ENCODE measurements at regions of chr7 and their contacts with region 1.

Region 1: GRCh38 chr7:74115326-74115725 is 31.7 kb downstream of the LIMK1 start:
- DNase-seq: no peak
- H3K4me3 ChIP-seq: no peak overlapping the region
- H3K27ac ChIP-seq: no peak overlapping the region
- H3K4me1 ChIP-seq: no peaks in the 10 kb centered on the region
- H3K27me3 ChIP-seq: no peaks in the 10 kb centered on the region
- CTCF ChIP-seq: no peak

Region 2: GRCh38 chr7:73822319-73823076 is 292.8 kb before region 1 on chr7:
- CTCF ChIA-PET with region 1: no interaction called
- dilution Hi-C with region 1: no loop called
- in situ Hi-C with region 1: no loop called
- intact Hi-C with region 1: no loop called
- DNase-seq: peak; percentile 100
- H3K4me3 ChIP-seq: no peak overlapping the region
- H3K27ac ChIP-seq: peak overlapping the region; percentile 90
- H3K4me1 ChIP-seq: peaks cover 19% of the 10 kb centered on the region
- H3K27me3 ChIP-seq: no peaks in the 10 kb centered on the region
- CTCF ChIP-seq: no peak

Region 3: DNA sequence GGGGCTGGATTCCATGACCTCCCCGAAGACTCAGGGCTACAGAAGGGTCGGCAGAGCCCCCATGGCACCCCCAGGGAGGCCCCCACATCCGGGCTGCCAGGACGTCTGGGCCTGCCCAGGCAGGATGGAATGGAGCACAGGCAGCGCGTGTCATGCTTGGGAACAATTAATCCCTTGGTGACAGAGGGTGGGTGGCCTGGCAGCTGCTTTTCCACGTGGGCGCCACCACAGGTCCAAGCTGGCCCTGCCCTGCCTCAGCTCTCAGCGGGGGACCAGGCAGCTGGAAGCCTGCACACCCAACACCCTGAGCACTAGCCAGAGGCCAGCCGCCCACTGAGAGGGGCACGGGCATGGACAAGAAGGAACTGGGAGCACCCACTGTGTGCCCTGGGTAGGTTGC is 76.0 kb before region 1 on chr7:
- CTCF ChIA-PET with region 1: no interaction called
- dilution Hi-C with region 1: loop called (anchors 5 kb)
- in situ Hi-C with region 1: no loop called
- intact Hi-C with region 1: no loop called
- DNase-seq: peak; percentile 10
- H3K4me3 ChIP-seq: no peak overlapping the region
- H3K27ac ChIP-seq: no peak overlapping the region
- H3K4me1 ChIP-seq: peaks cover 13% of the 10 kb centered on the region
- H3K27me3 ChIP-seq: no peaks in the 10 kb centered on the region
- CTCF ChIP-seq: no peak

Region 4: DNA sequence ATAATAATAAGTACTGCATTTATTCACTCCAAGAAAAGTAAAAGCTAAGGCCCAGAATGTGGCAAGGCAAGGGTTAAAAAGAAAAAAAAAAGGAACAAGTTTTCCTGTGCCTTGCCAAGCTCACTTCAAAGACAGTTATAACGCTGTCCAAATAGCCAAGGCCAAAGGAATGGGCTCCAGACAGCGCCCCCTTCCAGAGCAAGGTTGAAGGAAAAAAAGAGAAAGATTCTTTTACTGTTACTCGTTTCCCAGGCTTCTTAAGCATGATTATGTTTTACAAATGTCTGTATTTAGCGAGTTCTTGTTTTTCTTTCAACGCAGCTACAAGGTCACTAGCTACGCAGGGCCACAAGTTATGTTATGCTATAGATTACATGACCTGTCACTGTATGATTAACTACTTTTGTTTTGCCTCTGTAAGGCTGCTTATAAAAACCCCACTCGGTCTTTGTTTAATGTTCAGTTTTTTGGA is 49.7 kb after region 1 on chr7:
- CTCF ChIA-PET with region 1: no interaction called
- dilution Hi-C with region 1: no loop called
- in situ Hi-C with region 1: no loop called
- intact Hi-C with region 1: no loop called
- DNase-seq: no peak
- H3K4me3 ChIP-seq: no peak overlapping the region
- H3K27ac ChIP-seq: no peak overlapping the region
- H3K4me1 ChIP-seq: no peaks in the 10 kb centered on the region
- H3K27me3 ChIP-seq: no peaks in the 10 kb centered on the region
- CTCF ChIP-seq: peak in 1 of 2 donors; percentile 28

Region 5: DNA sequence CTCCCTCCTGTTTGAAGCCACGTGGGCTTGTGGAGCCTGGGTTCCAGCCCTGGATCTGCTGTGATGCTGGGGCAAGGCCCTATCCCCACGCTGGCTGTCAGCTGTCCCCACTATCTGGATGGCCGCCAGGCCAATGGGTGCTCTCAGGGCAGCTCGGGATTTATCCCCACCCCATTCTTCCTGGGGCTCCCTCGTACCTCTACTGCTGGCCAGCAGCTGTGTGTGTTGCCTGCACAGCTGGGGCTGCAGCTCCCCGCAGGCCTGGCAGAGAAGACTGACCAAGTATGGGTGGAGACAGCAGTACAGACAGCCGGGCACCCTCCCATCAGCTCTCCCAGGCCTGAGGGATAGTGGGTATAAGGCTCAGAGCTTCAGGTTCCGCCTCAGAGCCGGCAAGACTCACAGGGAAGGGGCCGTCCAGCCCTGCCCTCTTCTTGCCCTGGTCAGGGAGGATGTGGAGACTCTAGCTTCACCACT is 187.5 kb after region 1 on chr7:
- CTCF ChIA-PET with region 1: no interaction called
- dilution Hi-C with region 1: no loop called
- in situ Hi-C with region 1: no loop called
- intact Hi-C with region 1: no loop called
- DNase-seq: no peak
- H3K4me3 ChIP-seq: no peak overlapping the region
- H3K27ac ChIP-seq: no peak overlapping the region
- H3K4me1 ChIP-seq: peaks cover 18% of the 10 kb centered on the region
- H3K27me3 ChIP-seq: no peaks in the 10 kb centered on the region
- CTCF ChIP-seq: no peak

Measured in mammary epithelial cell (primary cell).